ENCODE measurements at regions of chr17 and their contacts with region 1.

Region 1: GRCh38 chr17:47941236-47941994 is at the start of gene PNPO:
- ATAC-seq: peak; percentile 98 to 100 (median 98)
- H3K4me3 ChIP-seq: peak within 1 kb of the TSS; percentile 39 to 86 (median 71)
- H3K27ac ChIP-seq: peak within 1 kb of the TSS in 1 of 2 donors; percentile 27
- H3K4me1 ChIP-seq: peaks cover 8% of the 10 kb centered on the region in 2 donors
- total RNA-seq, gene PNPO: 7.3 to 54.6 (median 10.7) TPM

Region 2: GRCh38 chr17:47733047-47733673 is 208.3 kb before region 1 on chr17 and contains the start of gene TBX21:
- in situ Hi-C with region 1: no loop called
- ATAC-seq: peak; percentile 72 to 93 (median 90)
- H3K4me3 ChIP-seq: peak within 1 kb of the TSS; percentile 13 to 32 (median 14)
- H3K27ac ChIP-seq: no peak within 1 kb of the TSS
- H3K4me1 ChIP-seq: peaks cover 0 to 3% of the 10 kb centered on the region in 2 donors
- total RNA-seq, gene TBX21: 0.04 to 0.38 (median 0.14) TPM in 5 of 8 experiments, not detected in the others

Region 3: GRCh38 chr17:47831003-47831933 is 110.1 kb before region 1 on chr17 and contains the starts of genes LRRC46 and MRPL10:
- in situ Hi-C with region 1: loop called in 1 of 9 experiments (anchors 25 kb)
- ATAC-seq: peak; percentile 91 to 97 (median 95)
- H3K4me3 ChIP-seq: peak within 1 kb of the TSS; percentile 62 to 97 (median 79)
- H3K27ac ChIP-seq: peak within 1 kb of the TSS; percentile 82 to 88
- H3K4me1 ChIP-seq: peaks cover 11% of the 10 kb centered on the region in 2 donors
- total RNA-seq, gene LRRC46: 0.27 to 5.2 (median 1.2) TPM
- total RNA-seq, gene MRPL10: 41.5 to 58.3 (median 46.3) TPM

Region 4: DNA sequence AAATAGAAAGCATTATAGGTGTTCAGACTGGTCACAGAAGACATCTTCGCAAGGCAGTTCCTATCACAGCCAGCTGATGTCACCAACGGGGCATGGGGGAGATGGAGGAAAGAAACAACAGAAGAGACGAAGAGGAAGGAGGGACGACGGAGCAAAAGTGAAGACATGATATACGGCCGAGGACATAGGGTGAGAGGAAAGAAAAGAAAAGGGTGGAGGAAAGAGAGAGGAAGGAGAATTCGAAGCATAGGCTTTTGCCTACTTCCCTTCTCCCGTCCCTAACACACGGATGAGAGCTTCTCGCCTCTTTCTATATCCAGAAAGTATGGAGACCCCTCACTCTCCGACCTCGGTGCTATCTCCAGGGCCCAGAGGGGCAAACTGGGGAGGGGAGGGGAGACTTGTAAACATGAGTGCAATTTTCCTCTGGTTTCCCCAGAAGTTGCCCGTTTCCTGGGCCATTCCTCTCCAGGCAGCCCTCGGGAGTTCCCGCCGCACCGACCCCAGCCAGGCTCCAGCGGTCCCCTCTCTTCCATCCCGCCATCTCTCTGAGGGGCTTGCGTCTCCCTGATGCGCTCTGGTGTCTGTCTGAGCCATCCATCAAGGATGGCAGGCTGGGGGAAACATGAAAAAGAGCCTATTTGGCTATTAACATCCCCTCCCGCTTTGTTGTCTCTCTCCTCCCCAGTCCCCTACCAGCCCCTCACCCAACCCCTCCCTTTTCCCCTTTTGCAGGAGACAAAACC is 70.2 kb after region 1 on chr17:
- in situ Hi-C with region 1: loop called in 1 of 9 experiments (anchors 10 kb)
- ATAC-seq: peak in 7 of 8 experiments; percentile 18 to 76 (median 42)
- H3K4me3 ChIP-seq: peak overlapping the region; percentile 14 to 32 (median 23)
- H3K27ac ChIP-seq: peak overlapping the region; percentile 78 to 87
- H3K4me1 ChIP-seq: peaks cover 45 to 47% of the 10 kb centered on the region in 2 donors

Region 5: DNA sequence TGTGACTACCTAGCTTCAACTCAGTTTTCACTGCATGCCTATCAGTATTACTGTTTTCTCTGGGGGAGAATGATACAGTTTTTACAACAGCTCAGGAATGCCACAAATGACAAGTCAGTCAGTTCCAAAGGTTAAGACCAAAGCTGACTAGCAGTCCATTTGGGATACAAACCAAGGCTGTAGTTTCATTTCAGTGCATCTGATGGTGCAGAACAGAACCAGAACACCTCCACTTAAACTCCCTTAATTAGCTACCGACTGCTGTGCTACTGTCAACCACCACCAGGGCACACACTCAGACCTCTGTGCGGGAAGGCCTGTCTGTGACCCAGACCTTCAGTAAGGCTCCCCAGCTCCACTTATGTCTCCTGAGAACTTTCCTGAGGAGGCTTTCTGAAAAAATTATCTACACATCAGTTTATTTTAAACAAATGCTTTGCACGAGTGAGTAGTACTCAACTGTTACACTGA is 127.1 kb after region 1 on chr17:
- in situ Hi-C with region 1: no loop called
- ATAC-seq: peak in 3 of 8 experiments; percentile 31 to 69 (median 32)
- H3K4me3 ChIP-seq: no peak overlapping the region
- H3K27ac ChIP-seq: no peak overlapping the region
- H3K4me1 ChIP-seq: no peaks in the 10 kb centered on the region

Region 6: GRCh38 chr17:48804925-48805411 is 863.6 kb after region 1 on chr17:
- in situ Hi-C with region 1: no loop called
- ATAC-seq: peak; percentile 91 to 99 (median 95)
- H3K4me3 ChIP-seq: no peak overlapping the region
- H3K27ac ChIP-seq: no peak overlapping the region
- H3K4me1 ChIP-seq: peaks cover 0 to 3% of the 10 kb centered on the region in 2 donors